Heart left ventricle (tissue), 16 donors: ENCODE measurements at regions of chr6 and their contacts with region 1.

Region 1: GRCh38 chr6:42043787-42044475 is 6.4 kb upstream of the TAF8 start:
- DNase-seq: peak; percentile 87 to 92 (median 88)
- ATAC-seq: peak; percentile 52 to 80 (median 74)
- H3K4me3 ChIP-seq: peak overlapping the region in 4 of 12 donors; percentile 15 to 37 (median 20)
- H3K27ac ChIP-seq: peak overlapping the region in 10 of 12 donors; percentile 81 to 98 (median 94)
- H3K4me1 ChIP-seq: peaks cover 16 to 94% (median 59%) of the 10 kb centered on the region in 12 donors
- H3K27me3 ChIP-seq: no peaks in the 10 kb centered on the region
- CTCF ChIP-seq: peak; percentile 92 to 98 (median 97)
- POLR2A ChIP-seq: no peak

Region 2: DNA sequence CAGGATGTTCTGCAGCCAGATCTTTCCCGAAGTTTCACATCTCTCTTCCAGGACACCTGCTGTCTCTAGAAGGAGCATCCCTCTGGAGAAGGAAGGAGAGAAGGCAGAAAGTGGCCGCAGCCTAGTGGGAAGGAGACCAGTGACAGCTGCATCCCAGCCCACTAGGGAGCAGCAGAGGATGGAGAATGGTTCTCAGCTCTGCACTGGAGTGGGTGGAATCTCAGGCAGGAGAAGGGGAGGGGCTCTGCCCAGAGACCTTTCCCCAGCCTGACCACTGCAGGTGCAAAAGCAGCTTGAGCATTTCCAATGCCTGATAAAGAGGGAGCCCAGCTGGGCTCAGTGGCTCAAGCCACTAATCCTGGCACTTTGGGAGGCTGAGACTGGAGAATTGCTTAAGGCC is 676.2 kb before region 1 on chr6:
- intact Hi-C with region 1: loop called in 2 of 10 experiments (anchors 10 kb)
- DNase-seq: peak in 4 of 5 donors; percentile 45 to 50 (median 48)
- ATAC-seq: peak; percentile 40 to 78 (median 76)
- H3K4me3 ChIP-seq: no peak overlapping the region
- H3K27ac ChIP-seq: no peak overlapping the region
- H3K4me1 ChIP-seq: peaks cover 0 to 23% (median 14%) of the 10 kb centered on the region in 12 donors
- H3K27me3 ChIP-seq: peaks cover 6 to 64% (median 29%) of the 10 kb centered on the region in 9 donors
- CTCF ChIP-seq: peak; percentile 23 to 74 (median 60)
- POLR2A ChIP-seq: no peak

Region 3: GRCh38 chr6:41846666-41847237 is 197.2 kb before region 1 on chr6:
- intact Hi-C with region 1: loop called (anchors 1 to 5 kb)
- DNase-seq: peak in 4 of 5 donors; percentile 43 to 70 (median 56)
- ATAC-seq: peak; percentile 87 to 98 (median 96)
- H3K4me3 ChIP-seq: no peak overlapping the region
- H3K27ac ChIP-seq: peak overlapping the region; percentile 2 to 68 (median 42)
- H3K4me1 ChIP-seq: peaks cover 0 to 15% (median 4%) of the 10 kb centered on the region in 12 donors
- H3K27me3 ChIP-seq: no peaks in the 10 kb centered on the region
- CTCF ChIP-seq: peak; percentile 67 to 88 (median 78)
- POLR2A ChIP-seq: no peak

Region 4: DNA sequence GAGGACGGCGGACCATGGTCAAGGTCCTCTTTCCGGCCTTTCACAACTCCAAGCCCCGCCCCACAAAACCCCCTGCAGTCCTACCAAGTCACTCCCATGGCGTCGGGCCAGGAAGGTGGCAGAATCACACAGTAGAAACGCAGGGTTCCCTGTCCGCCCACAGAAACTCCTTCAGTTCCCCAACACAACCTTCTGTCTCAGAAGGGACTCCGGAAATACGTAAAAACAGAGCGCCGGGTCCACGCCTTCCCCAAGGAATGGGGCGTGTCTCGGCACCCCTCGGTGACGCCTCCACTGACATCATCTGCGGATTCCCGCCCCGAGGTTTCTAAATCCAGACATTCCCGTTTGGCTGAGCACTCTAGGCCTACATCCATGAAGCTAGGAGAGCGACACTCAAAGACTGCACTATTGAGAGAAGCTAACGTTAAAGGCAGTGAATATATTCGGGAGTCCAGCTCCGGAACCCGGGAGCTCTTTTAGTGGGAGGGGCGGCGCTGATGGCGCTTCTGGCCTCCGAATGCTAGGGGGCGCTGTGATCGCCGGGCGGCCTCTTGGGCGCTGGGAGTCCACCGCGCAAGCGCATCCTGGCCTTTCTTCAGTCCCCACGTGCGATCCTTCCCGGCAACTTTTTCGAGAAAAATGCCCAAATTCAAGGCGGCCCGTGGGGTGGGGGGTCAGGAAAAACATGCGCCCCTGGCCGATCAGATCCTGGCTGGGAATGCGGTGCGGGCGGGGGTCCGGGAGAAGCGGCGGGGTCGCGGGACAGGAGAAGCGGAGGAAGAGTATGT is 122.8 kb before region 1 on chr6 and contains the starts of genes BYSL and MED20:
- intact Hi-C with region 1: loop called in 5 of 10 experiments (anchors 1 to 5 kb)
- DNase-seq: peak; percentile 93 to 95 (median 95)
- ATAC-seq: peak; percentile 98 to 99 (median 98)
- H3K4me3 ChIP-seq: peak within 1 kb of the TSS; percentile 64 to 93 (median 83)
- H3K27ac ChIP-seq: peak within 1 kb of the TSS; percentile 95 to 99 (median 98)
- H3K4me1 ChIP-seq: peaks cover 3 to 48% (median 23%) of the 10 kb centered on the region in 12 donors
- H3K27me3 ChIP-seq: no peaks in the 10 kb centered on the region
- CTCF ChIP-seq: peak; percentile 89 to 100 (median 99)
- POLR2A ChIP-seq: peak in 1 of 2 donors; percentile 62
- total RNA-seq, gene BYSL: 4.5 to 15.3 (median 9.2) TPM
- total RNA-seq, gene MED20: 13.5 to 25.5 (median 16.9) TPM

Region 5: GRCh38 chr6:41941280-41942066 is 102.5 kb before region 1 on chr6 and contains the start of gene CCND3:
- intact Hi-C with region 1: loop called (anchors 1 to 5 kb)
- DNase-seq: peak; percentile 94 to 97 (median 95)
- ATAC-seq: peak; percentile 84 to 95 (median 94)
- H3K4me3 ChIP-seq: peak within 1 kb of the TSS; percentile 63 to 99 (median 88)
- H3K27ac ChIP-seq: peak within 1 kb of the TSS; percentile 54 to 95 (median 86)
- H3K4me1 ChIP-seq: peaks cover 7 to 63% (median 46%) of the 10 kb centered on the region in 12 donors
- H3K27me3 ChIP-seq: no peaks in the 10 kb centered on the region
- CTCF ChIP-seq: peak in 2 of 12 donors; percentile 2 to 11
- POLR2A ChIP-seq: peak in 1 of 2 donors; percentile 70
- total RNA-seq, gene CCND3: 33.9 to 116 (median 46.2) TPM